Head of caudate nucleus (tissue), 42 donors: ENCODE measurements at regions of chr10 and their contacts with region 1.

Region 1: GRCh38 chr10:69639291-69640195 is 9.5 kb downstream of the FAM241B start:
- DNase-seq: peak; percentile 57 to 91 (median 80)

Region 2: GRCh38 chr10:69237528-69238159 is 401.9 kb before region 1 on chr10:
- intact Hi-C with region 1: loop called (anchors 10 kb)
- DNase-seq: peak; percentile 70 to 96 (median 91)

Region 3: GRCh38 chr10:69413221-69413865 is 226.2 kb before region 1 on chr10:
- intact Hi-C with region 1: loop called (anchors 10 kb)
- DNase-seq: peak; percentile 28 to 83 (median 59)

Region 4: DNA sequence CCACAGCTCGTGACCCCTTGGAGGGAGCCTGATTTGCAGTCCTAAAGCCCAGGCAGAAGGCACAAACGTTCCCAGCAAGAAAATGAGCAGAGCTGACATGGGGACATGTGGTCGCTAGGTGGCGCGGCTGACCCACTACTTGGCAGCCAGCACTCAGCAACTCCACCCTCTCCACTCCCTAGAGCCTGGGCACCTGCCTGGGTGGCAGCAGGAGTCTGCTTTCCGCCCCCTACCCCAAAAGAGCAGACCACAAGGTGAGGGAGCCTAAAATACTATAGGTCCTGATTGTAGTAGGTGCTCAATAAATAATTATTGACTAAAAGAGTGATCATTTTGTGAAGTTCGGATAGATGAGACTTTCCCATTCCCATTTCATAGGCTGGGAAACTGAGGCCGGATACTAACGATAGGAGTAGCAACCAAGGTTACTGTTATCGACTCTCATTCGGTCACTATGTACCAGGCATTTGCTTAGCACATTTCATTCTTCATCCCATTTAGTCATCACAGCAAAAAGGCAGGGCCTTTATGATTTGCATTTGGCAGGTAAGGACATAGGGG is 123.8 kb before region 1 on chr10:
- intact Hi-C with region 1: loop called (anchors 5 kb)
- DNase-seq: peak; percentile 56 to 86 (median 72)

Region 5: GRCh38 chr10:69567920-69568319 is 71.6 kb before region 1 on chr10:
- intact Hi-C with region 1: no loop called
- DNase-seq: peak in 15 of 42 donors; percentile 9 to 62 (median 22)

Region 6: GRCh38 chr10:69628891-69629290 is 10.7 kb before region 1 on chr10:
- intact Hi-C with region 1: no loop called
- DNase-seq: peak in 1 of 42 donors; percentile 30

Region 7: DNA sequence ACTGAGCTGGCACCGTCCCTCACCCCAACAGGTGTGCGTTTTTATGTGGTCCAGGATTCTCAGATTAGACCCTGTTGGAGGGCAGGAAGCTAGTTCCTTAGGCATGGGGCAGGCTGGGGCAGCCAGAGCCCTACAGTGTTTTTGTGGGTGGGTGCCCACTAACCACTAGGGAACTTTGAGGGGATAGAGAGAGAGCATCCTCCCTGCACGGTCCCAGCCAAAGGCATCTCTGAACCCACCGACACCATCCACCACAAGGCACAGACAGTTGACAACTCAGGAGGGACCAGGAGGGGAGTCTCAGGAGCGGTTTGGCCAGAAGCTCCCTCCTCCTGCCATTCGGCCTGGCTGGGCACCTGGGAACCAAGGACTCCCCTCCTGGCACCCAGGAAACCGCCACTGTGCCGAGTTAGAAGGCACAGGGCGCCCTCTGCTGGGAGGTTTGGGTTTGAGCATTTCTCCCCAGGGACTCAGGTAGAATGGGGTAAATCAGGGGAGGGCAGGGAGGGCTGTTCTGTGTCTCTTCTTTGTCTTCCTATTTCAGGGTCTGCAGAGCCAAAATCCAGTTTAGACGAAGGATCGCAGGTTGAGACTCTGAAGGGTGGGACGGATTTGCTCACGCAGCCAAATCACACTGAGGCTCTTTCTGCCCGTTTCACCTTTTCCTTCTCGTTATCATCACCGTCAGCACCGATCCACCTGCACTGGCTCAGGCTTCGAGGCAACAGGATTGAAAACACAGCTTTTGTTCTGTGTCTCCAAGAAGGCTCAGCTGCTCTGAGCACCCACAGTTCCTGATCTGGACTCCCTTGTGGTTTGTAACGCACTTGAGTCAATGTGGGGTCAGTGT is 77.4 kb after region 1 on chr10:
- intact Hi-C with region 1: loop called (anchors 5 kb)
- DNase-seq: peak; percentile 42 to 86 (median 72)

Region 8: GRCh38 chr10:69914398-69915214 is 275.1 kb after region 1 on chr10:
- intact Hi-C with region 1: loop called (anchors 5 kb)
- DNase-seq: peak; percentile 59 to 90 (median 78)